ENCODE measurements at regions of chr1 and their contacts with region 1.

Region 1: GRCh38 chr1:221741711-221742554 is at the start of gene DUSP10:
- H3K4me3 Mint-ChIP-seq: no peak within 1 kb of the TSS
- H3K27ac Mint-ChIP-seq: no peak within 1 kb of the TSS
- H3K4me1 Mint-ChIP-seq: peaks cover 23% of the 10 kb centered on the region
- H3K27me3 Mint-ChIP-seq: no peaks in the 10 kb centered on the region

Region 2: DNA sequence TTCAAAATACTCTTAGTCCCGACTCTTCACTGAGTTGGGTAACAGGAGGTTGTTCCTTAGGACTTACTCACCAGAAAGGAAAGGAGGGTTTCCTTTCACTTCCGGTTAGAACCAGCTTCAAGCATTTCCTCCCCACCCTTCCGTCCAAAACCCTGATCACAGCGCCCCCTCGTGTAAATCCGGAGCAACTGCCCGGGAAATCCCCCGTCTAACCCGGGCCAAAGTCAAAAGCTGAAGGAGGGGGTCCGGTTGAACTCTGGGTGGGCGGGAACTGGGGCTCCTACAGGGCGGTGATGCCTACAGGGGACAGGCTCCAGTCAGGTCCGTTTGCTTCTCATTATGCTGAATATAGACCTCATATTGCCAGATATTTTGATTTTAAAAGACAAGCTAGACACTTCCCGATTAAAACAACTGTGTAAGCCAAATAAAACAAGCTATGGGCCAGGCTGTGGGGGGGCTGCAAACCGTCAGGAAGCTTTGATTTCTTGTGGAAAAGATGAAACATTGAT is 1008.8 kb before region 1 on chr1:
- intact Hi-C with region 1: no loop called
- H3K4me3 Mint-ChIP-seq: no peak overlapping the region
- H3K27ac Mint-ChIP-seq: peak overlapping the region; percentile 29
- H3K4me1 Mint-ChIP-seq: peaks cover 20% of the 10 kb centered on the region
- H3K27me3 Mint-ChIP-seq: peaks cover 7% of the 10 kb centered on the region

Region 3: GRCh38 chr1:221543529-221544120 is 198.3 kb before region 1 on chr1:
- intact Hi-C with region 1: loop called (anchors 5 kb)
- H3K4me3 Mint-ChIP-seq: no peak overlapping the region
- H3K27ac Mint-ChIP-seq: no peak overlapping the region
- H3K4me1 Mint-ChIP-seq: peaks cover 7% of the 10 kb centered on the region
- H3K27me3 Mint-ChIP-seq: peaks cover under 1% of the 10 kb centered on the region

Region 4: GRCh38 chr1:221583465-221583864 is 158.5 kb before region 1 on chr1:
- intact Hi-C with region 1: no loop called
- H3K4me3 Mint-ChIP-seq: no peak overlapping the region
- H3K27ac Mint-ChIP-seq: no peak overlapping the region
- H3K4me1 Mint-ChIP-seq: no peaks in the 10 kb centered on the region
- H3K27me3 Mint-ChIP-seq: no peaks in the 10 kb centered on the region

Region 5: DNA sequence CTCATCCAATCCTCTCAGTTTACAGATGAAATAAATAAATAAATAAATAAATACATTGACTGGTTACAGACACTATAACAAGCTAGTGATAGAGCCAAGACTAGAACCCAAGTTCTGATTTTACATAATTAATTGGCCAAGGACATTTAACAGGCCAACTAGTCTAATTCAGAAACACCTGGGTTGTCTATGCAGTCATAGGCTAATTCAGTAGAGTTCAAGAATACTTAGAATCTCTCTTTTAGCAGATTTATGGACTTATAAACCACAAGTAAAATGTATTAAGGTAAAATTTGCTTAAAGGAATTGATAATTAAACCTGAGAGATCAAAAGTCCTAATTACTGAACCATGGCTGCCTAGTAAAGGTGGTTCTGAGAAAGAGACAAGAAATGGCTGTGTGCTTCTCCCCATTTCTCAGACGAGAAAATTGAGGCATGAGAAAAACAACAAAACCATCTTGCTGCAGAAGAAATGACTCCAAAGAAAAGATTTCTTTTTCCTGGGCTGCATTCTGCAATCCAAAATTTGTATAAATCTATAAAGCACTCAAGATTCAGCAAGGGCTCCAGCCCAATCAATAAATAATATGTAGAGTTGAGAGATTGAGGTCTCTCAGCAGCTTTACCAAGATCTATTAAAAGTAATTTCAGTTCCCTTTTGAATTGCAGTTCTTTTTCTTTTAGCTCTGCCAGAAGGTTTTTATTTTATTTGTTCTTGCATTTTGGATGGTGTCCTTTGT is 98.4 kb before region 1 on chr1:
- intact Hi-C with region 1: no loop called
- H3K4me3 Mint-ChIP-seq: no peak overlapping the region
- H3K27ac Mint-ChIP-seq: no peak overlapping the region
- H3K4me1 Mint-ChIP-seq: no peaks in the 10 kb centered on the region
- H3K27me3 Mint-ChIP-seq: no peaks in the 10 kb centered on the region

Region 6: DNA sequence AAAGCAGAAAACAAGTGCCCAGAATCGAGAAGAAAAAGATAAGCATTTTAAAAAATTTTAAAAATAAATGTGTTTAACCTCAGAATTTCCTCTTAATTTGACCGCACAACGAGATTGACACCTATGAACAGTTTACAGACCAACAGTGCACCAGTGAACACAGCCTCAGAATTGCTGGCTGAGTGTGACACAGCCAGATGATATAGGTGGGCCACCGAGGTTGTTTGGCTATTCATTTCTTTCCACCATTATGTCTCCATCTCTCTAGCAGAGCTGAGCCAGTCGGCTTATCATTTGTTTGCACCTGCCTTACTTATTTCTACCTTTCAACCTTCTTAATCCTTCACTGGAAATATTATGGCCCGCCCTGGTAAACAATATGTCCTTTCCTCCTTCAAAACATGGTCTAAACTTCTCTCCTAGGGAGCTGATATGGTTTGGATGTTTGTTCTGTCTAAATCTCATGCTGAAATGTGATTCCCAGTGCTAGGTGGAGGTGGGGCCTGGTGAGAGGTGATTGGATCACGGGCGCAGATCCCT is 86.1 kb before region 1 on chr1:
- intact Hi-C with region 1: loop called (anchors 5 kb)
- H3K4me3 Mint-ChIP-seq: no peak overlapping the region
- H3K27ac Mint-ChIP-seq: no peak overlapping the region
- H3K4me1 Mint-ChIP-seq: no peaks in the 10 kb centered on the region
- H3K27me3 Mint-ChIP-seq: no peaks in the 10 kb centered on the region

Region 7: DNA sequence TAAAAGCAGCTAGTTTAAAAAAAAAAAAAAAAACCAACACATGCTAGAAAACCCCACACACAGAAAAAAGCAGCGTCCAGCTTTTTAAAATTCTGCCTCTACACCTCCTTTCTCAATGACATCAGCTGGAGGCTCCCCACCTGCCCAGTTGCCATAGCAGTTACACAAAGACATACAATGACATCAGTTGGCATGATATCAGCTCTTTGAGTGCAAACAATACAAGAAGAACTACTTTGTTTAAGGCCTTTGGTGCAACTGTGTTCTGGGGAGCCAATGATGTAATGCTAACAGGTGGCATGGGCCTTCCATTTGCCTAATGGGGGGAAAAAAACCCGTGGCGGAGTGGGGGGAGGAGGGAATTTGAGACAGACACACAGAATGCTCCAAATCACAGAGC is 32.9 kb before region 1 on chr1:
- intact Hi-C with region 1: loop called (anchors 1 kb)
- H3K4me3 Mint-ChIP-seq: no peak overlapping the region
- H3K27ac Mint-ChIP-seq: peak overlapping the region; percentile 80
- H3K4me1 Mint-ChIP-seq: peaks cover 68% of the 10 kb centered on the region
- H3K27me3 Mint-ChIP-seq: no peaks in the 10 kb centered on the region

Region 8: GRCh38 chr1:221725735-221726672 is 15.9 kb before region 1 on chr1:
- intact Hi-C with region 1: loop called (anchors 2 kb)
- H3K4me3 Mint-ChIP-seq: peak overlapping the region; percentile 57
- H3K27ac Mint-ChIP-seq: peak overlapping the region; percentile 85
- H3K4me1 Mint-ChIP-seq: peaks cover 49% of the 10 kb centered on the region
- H3K27me3 Mint-ChIP-seq: no peaks in the 10 kb centered on the region

Region 9: DNA sequence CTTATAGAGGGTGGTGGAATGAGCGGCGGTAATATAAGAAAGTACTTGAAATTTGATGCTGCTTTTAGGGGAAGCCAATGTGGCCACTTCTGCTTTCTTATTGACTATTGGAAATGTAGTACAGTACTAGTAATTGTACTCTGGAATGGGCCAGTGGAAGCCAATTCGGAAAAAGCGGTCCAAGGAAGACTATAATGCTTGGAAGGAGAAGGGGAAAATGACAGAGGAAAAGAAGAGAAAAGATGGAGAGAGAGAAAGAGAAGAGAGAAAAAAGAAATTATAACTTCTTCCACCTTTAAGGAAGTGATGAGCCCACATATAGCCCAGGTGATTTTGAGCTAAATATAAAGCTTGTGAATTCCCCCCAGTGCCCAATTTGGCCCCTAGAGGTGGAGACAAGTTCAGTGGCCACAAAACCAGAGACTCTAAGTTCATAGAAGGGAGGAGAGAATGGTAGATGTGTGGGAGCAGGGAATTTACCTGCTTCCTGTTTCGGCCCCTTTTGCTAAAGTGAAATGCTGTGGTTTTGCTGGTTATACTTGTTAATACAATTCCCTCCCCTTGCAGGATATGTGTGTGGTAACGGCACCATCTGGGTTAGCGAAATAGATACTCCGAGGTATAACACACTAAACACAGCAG is 35.6 kb after region 1 on chr1:
- intact Hi-C with region 1: loop called (anchors 1 kb)
- H3K4me3 Mint-ChIP-seq: no peak overlapping the region
- H3K27ac Mint-ChIP-seq: peak overlapping the region; percentile 83
- H3K4me1 Mint-ChIP-seq: peaks cover 66% of the 10 kb centered on the region
- H3K27me3 Mint-ChIP-seq: peaks cover 2% of the 10 kb centered on the region

Region 10: GRCh38 chr1:221801773-221802516 is 60.0 kb after region 1 on chr1:
- intact Hi-C with region 1: no loop called
- H3K4me3 Mint-ChIP-seq: no peak overlapping the region
- H3K27ac Mint-ChIP-seq: no peak overlapping the region
- H3K4me1 Mint-ChIP-seq: no peaks in the 10 kb centered on the region
- H3K27me3 Mint-ChIP-seq: peaks cover 1% of the 10 kb centered on the region

Measured in dendritic cell treated with granulocyte-macrophage colony-stimulating factor and Interleukin-4, amounts not matched to agents 40 ng/mL and 50 ng/mL, for 4 days (primary cell).